ENCODE measurements at regions of chr17 and their contacts with region 1.

Region 1: DNA sequence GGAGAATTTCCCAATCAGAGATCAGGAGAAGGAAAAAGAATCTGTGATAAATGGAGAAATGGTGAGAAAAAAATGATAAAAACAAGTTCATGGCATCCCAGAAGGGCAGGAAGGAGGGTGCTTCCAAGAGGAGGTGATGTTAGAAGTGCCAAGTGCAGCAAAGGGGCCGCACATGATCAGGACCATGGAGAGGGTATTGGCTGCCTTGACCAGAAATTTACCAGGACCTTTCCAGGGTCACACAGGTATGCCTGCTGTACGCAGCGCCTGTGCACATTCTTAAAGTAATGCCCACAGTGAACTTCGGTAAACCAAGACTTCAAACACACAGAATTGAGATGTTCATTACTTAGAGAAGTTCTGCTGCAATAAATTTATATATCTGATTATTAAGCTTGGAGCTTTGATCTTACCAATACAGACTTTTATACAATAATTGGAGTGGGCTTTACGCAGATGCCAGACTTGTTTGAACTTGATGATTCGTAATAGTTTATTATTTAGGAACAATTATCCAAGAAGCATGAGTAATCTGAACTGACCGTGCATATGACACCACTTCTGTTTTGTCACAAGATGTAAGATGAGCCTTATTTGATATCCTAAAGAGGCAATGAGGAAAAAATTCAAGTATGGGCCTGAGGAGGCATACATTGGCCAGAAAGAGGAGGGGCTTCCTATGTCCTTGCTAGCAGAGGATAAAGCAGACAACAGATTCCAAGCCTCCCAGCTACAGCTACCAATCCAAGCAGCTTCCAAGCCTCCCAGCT is 2.2 kb upstream of the KRT33A start:
- DNase-seq: no peak
- ATAC-seq: no peak
- H3K4me3 ChIP-seq: no peak overlapping the region
- H3K27ac ChIP-seq: no peak overlapping the region
- H3K4me1 ChIP-seq: no peaks in the 10 kb centered on the region
- H3K27me3 ChIP-seq: peaks cover 0 to 25% (median 17%) of the 10 kb centered on the region in 7 donors
- CTCF ChIP-seq: no peak

Region 2: GRCh38 chr17:39591958-39592954 is 1760.5 kb before region 1 on chr17:
- intact Hi-C with region 1: loop called in 1 of 10 experiments (anchors 10 kb)
- DNase-seq: peak in 1 of 2 donors; percentile 44
- ATAC-seq: peak in 5 of 8 donors; percentile 46 to 52 (median 51)
- H3K4me3 ChIP-seq: no peak overlapping the region
- H3K27ac ChIP-seq: no peak overlapping the region
- H3K4me1 ChIP-seq: peaks cover 0 to 10% (median 1%) of the 10 kb centered on the region in 9 donors
- H3K27me3 ChIP-seq: peaks cover 0 to 66% (median 49%) of the 10 kb centered on the region in 7 donors
- CTCF ChIP-seq: no peak

Measured in heart right ventricle (tissue), 16 donors.